ENCODE measurements at regions of chr11 and their contacts with region 1.

Region 1: GRCh38 chr11:45017329-45017728 is 66.6 kb upstream of the TP53I11 start:
- DNase-seq: no peak
- ATAC-seq: peak; percentile 70; the same call in 1 of the 2 replicates
- H3K4me3 ChIP-seq: no peak overlapping the region
- H3K27ac ChIP-seq: no peak overlapping the region
- H3K4me1 ChIP-seq: no peaks in the 10 kb centered on the region
- H3K27me3 ChIP-seq: peaks cover 6% of the 10 kb centered on the region; the same call in 1 of the 2 replicates
- CTCF ChIP-seq: peak in 2 of 3 experiments; percentile 38 to 41; a peak in 4 of 6 replicates
- POLR2A ChIP-seq: no peak
- RAD21 ChIP-seq: no peak

Region 2: GRCh38 chr11:44785856-44786606 is 231.3 kb before region 1 on chr11:
- CTCF ChIA-PET with region 1: no interaction called
- POLR2A ChIA-PET with region 1: no interaction called
- RAD21 ChIA-PET with region 1: no interaction called
- intact Hi-C with region 1: no loop called
- DNase-seq: no peak
- ATAC-seq: peak; percentile 76; the same call in 1 of the 2 replicates
- H3K4me3 ChIP-seq: no peak overlapping the region
- H3K27ac ChIP-seq: no peak overlapping the region
- H3K4me1 ChIP-seq: no peaks in the 10 kb centered on the region
- H3K27me3 ChIP-seq: no peaks in the 10 kb centered on the region
- CTCF ChIP-seq: peak in 2 of 3 experiments; percentile 27 to 57; a peak in 3 of 6 replicates
- POLR2A ChIP-seq: no peak
- RAD21 ChIP-seq: no peak

Region 3: GRCh38 chr11:45067966-45068365 is 50.6 kb after region 1 on chr11:
- CTCF ChIA-PET with region 1: no interaction called
- POLR2A ChIA-PET with region 1: no interaction called
- RAD21 ChIA-PET with region 1: no interaction called
- intact Hi-C with region 1: loop called (anchors 5 kb)
- DNase-seq: no peak
- ATAC-seq: no peak
- H3K4me3 ChIP-seq: no peak overlapping the region
- H3K27ac ChIP-seq: no peak overlapping the region
- H3K4me1 ChIP-seq: no peaks in the 10 kb centered on the region
- H3K27me3 ChIP-seq: no peaks in the 10 kb centered on the region; the same call in 1 of the 2 replicates
- CTCF ChIP-seq: no peak
- POLR2A ChIP-seq: no peak
- RAD21 ChIP-seq: no peak